Heart left ventricle (tissue), 16 donors: ENCODE measurements at regions of chr11 and their contacts with region 1.

Region 1: DNA sequence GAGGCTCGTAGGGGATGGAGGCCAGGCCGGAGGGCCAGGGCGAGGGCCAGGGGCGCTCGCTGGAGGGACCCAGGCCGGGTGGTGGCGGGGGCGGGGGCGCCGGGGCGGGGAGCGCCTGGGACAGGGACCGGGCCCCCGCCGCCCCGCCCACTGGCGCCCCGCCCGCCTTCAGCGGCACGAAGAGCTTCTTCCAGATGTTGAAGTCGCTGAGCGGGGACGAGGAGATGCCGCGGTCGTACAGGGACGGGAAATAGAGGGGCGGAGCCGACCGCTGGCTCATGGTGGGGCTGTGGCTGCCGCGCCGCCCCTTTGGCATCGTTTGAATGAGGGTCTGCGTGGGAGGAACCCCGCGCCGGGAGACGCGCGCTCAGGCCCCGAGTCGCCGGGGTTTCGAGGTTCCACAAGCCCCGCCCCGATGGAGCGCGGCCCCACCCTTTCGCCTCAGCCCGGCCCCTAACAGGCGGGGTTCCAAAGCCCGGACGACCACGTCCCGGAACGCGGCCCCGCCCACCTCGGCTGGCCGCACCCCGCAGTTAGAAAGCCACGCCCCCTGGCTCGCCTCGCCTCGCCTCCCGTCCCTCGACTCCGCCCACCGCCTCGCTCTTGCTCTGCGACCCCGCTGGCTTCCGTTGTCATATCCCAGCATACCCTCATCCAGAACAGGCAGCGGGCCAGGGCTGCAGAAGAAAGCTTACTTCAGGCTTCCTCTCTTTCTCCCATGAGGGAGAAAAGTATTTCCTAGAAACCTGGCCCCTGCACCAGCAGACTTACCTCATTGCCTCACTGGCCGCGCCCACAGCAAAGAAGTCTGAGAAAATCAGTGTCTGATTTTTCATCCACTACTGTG is at the start of gene C11orf91:
- DNase-seq: peak; percentile 98 to 99 (median 99)
- ATAC-seq: peak; percentile 69 to 89 (median 84)
- H3K4me3 ChIP-seq: peak within 1 kb of the TSS; percentile 36 to 66 (median 53)
- H3K27ac ChIP-seq: peak within 1 kb of the TSS; percentile 61 to 94 (median 88)
- H3K4me1 ChIP-seq: peaks cover 11 to 84% (median 52%) of the 10 kb centered on the region in 12 donors
- H3K27me3 ChIP-seq: no peaks in the 10 kb centered on the region
- CTCF ChIP-seq: no peak
- POLR2A ChIP-seq: peak in 1 of 2 donors; percentile 56
- total RNA-seq, gene C11orf91: 0.56 to 1.00 (median 0.70) TPM in 4 of 9 donors, not detected in the others

Region 2: DNA sequence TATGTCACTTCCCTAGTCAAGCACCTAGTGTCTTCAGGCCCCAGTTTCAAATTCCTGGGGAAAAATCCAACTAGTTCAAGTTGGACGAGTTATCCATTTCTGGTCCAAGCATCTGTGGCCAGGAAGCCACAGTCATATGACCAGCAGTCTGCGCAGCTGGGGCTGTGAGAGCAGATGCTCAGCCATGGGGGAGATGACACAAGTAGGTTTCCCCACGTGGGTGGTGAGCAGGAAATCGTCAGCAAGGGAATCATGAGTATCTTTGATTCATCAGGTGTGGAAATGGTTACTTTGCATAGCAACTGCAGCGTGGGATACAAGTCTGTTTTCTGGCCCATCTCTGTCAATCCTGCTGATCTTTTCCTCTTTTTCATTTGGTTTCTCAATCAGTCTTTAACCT is 185.3 kb before region 1 on chr11:
- intact Hi-C with region 1: no loop called
- DNase-seq: peak in 3 of 5 donors; percentile 35 to 46 (median 46)
- ATAC-seq: peak in 2 of 4 donors; percentile 78 to 87
- H3K4me3 ChIP-seq: no peak overlapping the region
- H3K27ac ChIP-seq: peak overlapping the region in 1 of 12 donors; percentile 19
- H3K4me1 ChIP-seq: no peaks in the 10 kb centered on the region
- H3K27me3 ChIP-seq: peaks cover 0 to 10% (median 0%) of the 10 kb centered on the region in 9 donors
- CTCF ChIP-seq: no peak
- POLR2A ChIP-seq: no peak

Region 3: DNA sequence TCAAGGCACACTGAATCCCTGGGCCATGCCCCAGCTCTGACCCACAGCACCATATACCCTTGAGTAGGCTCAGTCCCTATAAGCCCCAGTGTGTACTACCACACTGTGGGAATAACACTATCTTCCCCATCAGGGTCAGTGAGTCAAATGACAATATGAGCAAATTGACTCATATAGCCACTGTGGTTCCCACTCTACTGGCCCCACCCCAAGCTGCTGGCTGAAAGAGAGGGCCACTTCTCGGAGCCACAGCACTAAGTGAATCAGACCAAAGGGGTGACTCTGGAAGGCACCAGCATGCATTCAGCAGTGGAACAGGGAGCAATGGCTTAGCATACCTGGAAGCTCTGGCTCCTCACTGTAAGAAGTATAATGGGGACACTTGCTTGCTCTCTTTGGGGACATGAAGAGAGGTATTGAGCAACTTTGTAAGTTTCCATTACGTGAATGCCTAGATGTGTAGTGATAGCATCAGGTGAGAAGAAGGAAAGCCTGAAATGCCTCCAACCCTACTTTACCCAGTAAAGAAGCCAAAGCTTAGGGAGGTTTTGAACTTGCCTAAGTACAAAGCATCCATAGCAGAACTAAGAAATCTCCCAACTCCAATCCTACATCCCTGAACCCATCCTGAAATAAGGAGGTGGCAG is 22.1 kb after region 1 on chr11:
- intact Hi-C with region 1: loop called in 1 of 10 experiments (anchors 2 kb)
- DNase-seq: peak in 1 of 5 donors; percentile 61
- ATAC-seq: peak in 3 of 4 donors; percentile 1 to 30 (median 26)
- H3K4me3 ChIP-seq: peak overlapping the region in 1 of 12 donors; percentile 7
- H3K27ac ChIP-seq: peak overlapping the region; percentile 78 to 96 (median 91)
- H3K4me1 ChIP-seq: peaks cover 40 to 95% (median 70%) of the 10 kb centered on the region in 12 donors
- H3K27me3 ChIP-seq: no peaks in the 10 kb centered on the region
- CTCF ChIP-seq: no peak
- POLR2A ChIP-seq: no peak

Region 4: GRCh38 chr11:33736148-33736809 is 35.6 kb after region 1 on chr11 and contains the start of gene CD59:
- intact Hi-C with region 1: loop called in 7 of 10 experiments (anchors 1 to 5 kb)
- DNase-seq: peak; percentile 98
- ATAC-seq: peak; percentile 94 to 96 (median 96)
- H3K4me3 ChIP-seq: peak within 1 kb of the TSS; percentile 75 to 98 (median 92)
- H3K27ac ChIP-seq: peak within 1 kb of the TSS; percentile 93 to 100 (median 98)
- H3K4me1 ChIP-seq: peaks cover 4 to 51% (median 41%) of the 10 kb centered on the region in 12 donors
- H3K27me3 ChIP-seq: no peaks in the 10 kb centered on the region
- CTCF ChIP-seq: peak in 1 of 12 donors; percentile 19
- POLR2A ChIP-seq: peak; percentile 80 to 98
- total RNA-seq, gene CD59: 588 to 1,434 (median 930) TPM

Region 5: DNA sequence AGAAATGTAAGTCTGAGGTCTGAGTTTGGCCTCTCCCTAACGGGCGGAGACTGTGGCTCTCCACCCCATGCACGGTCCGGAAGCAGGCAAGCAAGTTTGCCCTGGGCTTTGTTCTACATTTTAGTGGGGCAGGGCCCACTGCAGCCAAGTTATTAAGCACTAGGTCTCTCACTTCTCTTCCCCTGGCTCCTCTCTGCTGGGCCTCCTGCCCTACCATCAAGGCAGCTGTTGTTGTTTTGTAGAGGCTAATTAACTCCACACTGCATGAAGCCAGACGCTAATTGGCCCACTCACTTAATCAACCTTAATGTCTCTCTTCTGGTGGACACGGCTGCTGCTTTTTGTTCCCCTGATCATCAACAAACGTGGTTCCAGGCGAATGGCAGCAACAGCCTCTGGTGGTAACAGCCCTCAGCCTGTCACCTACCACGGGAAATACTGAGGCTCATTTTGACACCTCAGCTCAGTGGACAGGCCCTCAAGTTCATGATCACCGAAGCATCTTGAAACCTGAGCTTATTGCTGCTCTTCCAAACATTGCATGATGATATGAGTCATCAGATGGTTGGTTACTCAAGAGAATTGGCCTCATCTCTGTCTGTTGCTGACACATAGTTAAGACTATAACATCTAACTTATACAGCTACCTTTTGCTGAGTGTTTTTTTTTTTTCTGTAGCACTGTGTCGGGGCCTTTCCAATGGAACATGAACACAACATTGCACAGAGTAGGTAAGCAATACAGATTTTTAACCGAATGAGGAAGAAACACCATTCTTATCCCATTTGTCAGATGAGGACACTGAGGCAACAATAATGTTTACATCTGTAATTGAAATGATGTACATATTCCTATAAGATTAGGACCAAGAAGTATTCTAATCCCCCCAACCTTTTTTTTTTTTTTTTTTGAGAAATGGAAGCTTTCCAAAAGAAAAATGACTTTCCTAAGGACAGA is 212.0 kb after region 1 on chr11:
- intact Hi-C with region 1: no loop called
- DNase-seq: peak in 3 of 5 donors; percentile 35 to 51 (median 37)
- ATAC-seq: peak in 3 of 4 donors; percentile 51 to 68 (median 59)
- H3K4me3 ChIP-seq: no peak overlapping the region
- H3K27ac ChIP-seq: peak overlapping the region in 1 of 12 donors; percentile 76
- H3K4me1 ChIP-seq: peaks cover 0 to 47% (median 0%) of the 10 kb centered on the region in 12 donors
- H3K27me3 ChIP-seq: peaks cover 0 to 2% (median 0%) of the 10 kb centered on the region in 9 donors
- CTCF ChIP-seq: no peak
- POLR2A ChIP-seq: no peak

Region 6: DNA sequence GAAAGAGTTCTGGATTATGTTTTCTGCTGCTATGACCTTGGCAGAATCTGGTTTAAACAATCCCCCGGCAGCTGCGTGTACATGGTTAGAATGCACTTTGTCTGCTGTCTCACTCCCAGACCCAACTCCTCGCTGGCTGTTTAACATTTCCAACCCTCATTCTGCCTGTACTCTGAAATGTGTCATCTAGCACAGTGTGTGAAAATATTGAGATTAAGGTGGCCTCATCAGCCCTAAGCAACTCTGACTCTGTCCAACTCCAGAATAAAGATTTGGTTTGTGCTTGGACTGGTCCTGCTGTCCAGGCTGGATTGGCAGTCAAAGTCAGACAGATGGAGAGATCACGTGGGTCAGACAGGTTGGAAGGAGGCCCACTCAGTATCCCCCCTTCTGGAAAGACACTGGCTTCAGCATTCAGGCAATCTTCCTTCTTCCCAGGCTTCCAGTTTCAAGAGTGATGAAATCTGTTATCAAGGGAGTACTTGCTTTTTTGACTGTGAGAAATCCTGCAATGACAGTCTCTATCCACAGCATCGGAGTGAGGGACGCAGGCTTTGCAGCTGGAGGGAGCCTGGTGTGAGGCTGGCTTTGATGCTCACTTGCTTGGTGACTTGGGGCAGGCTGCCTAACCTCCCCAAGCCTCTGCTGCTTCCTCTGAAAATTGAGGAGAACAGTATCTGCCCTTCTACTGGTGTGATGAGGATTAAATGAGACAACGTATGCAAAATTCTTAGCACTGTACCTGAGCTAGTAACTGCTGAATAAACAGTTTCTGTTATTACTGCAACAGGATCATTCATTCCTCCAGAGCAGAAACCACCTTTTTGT is 627.4 kb after region 1 on chr11:
- intact Hi-C with region 1: no loop called
- DNase-seq: peak in 4 of 5 donors; percentile 40 to 75 (median 60)
- ATAC-seq: peak; percentile 75 to 87 (median 84)
- H3K4me3 ChIP-seq: no peak overlapping the region
- H3K27ac ChIP-seq: peak overlapping the region in 8 of 12 donors; percentile 21 to 61 (median 44)
- H3K4me1 ChIP-seq: peaks cover 0 to 75% (median 34%) of the 10 kb centered on the region in 12 donors
- H3K27me3 ChIP-seq: no peaks in the 10 kb centered on the region
- CTCF ChIP-seq: no peak
- POLR2A ChIP-seq: no peak